MCF 10A (cell line): ENCODE measurements at regions of chr10 and their contacts with region 1.

Region 1: DNA sequence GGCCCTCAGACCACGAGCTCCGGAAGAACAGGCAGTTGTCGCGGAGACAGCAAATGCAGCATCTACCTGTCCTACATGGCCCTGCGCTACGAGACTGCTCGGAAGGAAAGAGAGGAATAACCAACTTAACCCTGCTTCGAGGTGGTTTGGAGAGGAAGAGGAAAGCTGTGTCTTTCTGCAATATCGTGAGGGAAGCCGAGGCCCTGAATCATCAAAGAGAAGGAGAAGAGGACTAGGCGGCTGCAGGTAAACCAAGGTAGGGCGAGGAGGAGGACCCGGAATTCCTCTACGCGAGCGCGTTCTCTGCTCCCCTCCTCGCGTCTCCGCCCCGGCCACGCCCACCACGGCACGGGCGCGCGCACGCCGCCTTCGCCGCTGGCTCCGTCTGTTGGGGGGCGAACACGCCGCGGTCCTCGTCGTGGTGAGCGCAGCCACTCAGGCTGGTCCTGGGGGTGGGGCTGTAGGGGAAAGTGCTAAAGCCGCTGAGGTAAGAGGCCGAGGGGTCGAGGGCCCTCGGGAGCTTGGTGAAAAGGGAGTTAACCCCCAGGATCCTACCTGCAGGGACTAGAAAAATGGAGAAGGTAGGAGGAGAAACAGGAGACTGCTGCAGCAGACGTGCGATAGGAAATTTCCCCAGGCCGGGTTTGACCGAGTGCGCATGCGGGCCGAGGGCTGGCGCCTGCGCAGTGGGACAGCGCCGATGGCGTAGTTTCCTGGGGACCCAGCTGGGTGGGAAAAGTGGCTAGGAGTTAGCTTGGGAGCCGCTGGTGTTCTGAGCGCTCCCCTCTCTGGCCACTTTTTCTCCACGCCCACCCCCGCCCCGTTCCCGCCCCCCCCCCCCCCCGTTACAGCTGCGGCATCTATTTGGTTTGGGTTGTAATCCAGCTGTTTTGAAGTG is at the starts of genes ANAPC16 and ASCC1:
- DNase-seq: peak; percentile 89
- H3K4me3 Mint-ChIP-seq: peak within 1 kb of the TSS; percentile 100
- H3K27ac Mint-ChIP-seq: peak within 1 kb of the TSS; percentile 92
- H3K4me1 Mint-ChIP-seq: peaks cover 6% of the 10 kb centered on the region
- H3K27me3 Mint-ChIP-seq: no peaks in the 10 kb centered on the region
- CTCF ChIP-seq: no peak
- total RNA-seq, gene ANAPC16: 97.0 and 110 TPM in 2 replicates
- total RNA-seq, gene ASCC1: 26.3 and 31.6 TPM in 2 replicates

Region 2: DNA sequence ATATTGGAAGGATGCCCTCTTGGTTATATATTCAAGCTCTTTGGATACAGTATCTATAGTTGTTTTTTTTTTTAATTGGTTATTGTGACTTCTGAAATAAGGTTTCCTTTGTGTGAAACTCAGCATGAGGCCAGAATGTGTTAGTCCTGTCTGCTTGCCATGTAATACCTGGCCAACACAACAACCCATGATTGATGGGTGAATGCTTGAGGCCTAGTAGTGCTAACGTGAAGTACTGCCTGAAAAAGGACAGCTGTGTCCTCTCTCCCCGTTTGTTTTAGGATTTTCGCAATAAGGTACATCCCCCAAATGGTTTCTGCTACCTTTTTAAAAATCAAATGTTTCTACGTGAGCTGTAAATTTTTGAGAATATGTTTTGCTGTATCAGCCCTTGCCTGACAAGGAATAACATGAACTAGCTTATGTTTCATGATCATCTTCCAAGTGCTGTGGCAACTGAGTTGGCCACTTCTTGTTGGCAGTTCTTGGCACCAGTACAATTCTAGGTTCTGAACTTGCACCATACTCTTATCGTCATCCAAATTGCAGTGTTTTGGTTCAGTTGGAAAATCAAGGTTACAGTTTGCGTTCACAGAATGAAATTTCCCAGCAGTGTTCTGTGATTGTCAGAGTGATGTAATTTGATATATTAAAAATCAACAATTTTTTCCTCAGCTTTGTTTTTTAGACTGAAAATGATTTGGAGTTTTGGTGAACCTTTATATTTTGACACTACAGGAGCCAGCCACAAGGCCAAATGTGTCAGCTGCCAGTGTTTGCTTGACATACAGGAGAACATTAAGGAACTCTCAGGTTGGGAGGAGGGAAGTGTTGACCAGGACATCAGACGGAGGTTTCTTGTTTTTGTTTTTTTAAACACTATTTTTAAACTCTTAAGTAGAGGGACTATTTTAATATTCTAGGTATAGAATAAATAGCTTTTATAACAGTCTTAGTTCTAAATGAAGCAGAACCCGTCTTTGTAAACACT is 13.7 kb after region 1 on chr10:
- CTCF ChIA-PET with region 1: no interaction called
- POLR2A ChIA-PET with region 1: interaction called, 13 read pairs
- intact Hi-C with region 1: no loop called
- DNase-seq: peak; percentile 91
- H3K4me3 Mint-ChIP-seq: no peak overlapping the region
- H3K27ac Mint-ChIP-seq: peak overlapping the region; percentile 68
- H3K4me1 Mint-ChIP-seq: peaks cover 25% of the 10 kb centered on the region
- H3K27me3 Mint-ChIP-seq: no peaks in the 10 kb centered on the region
- CTCF ChIP-seq: no peak

Region 3: GRCh38 chr10:72260588-72261322 is 44.9 kb after region 1 on chr10:
- CTCF ChIA-PET with region 1: no interaction called
- POLR2A ChIA-PET with region 1: interaction called, 17 read pairs
- intact Hi-C with region 1: no loop called
- DNase-seq: peak; percentile 99
- H3K4me3 Mint-ChIP-seq: peak overlapping the region; percentile 53
- H3K27ac Mint-ChIP-seq: peak overlapping the region; percentile 87
- H3K4me1 Mint-ChIP-seq: peaks cover 46% of the 10 kb centered on the region
- H3K27me3 Mint-ChIP-seq: no peaks in the 10 kb centered on the region
- CTCF ChIP-seq: no peak

Region 4: DNA sequence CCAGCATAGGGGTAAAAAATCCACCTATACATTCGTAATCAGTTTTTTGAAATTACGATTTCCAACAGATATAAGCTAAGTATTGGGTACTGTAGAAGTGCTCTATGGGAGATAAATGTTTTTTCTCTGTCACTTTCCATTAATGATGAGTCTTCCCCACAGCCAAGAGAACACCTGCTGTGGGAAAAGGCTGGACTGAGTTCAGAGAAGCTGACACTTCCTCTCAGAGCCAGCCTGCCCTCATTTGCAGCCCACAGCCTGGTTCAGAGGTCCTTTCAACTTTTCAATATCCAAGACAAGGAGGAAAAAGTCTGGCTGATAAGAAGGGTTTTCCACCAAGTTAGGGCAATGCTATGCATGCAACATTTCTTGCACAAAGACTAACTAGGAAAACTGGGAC is 203.3 kb after region 1 on chr10:
- CTCF ChIA-PET with region 1: no interaction called
- POLR2A ChIA-PET with region 1: no interaction called
- intact Hi-C with region 1: no loop called
- DNase-seq: no peak
- H3K4me3 Mint-ChIP-seq: no peak overlapping the region
- H3K27ac Mint-ChIP-seq: no peak overlapping the region
- H3K4me1 Mint-ChIP-seq: no peaks in the 10 kb centered on the region
- H3K27me3 Mint-ChIP-seq: no peaks in the 10 kb centered on the region
- CTCF ChIP-seq: no peak